ENCODE measurements at regions of chr7 and their contacts with region 1.

Region 1: GRCh38 chr7:25862260-25863037 is 289.5 kb upstream of the NFE2L3 start:
- DNase-seq: peak; percentile 68 to 94 (median 80)
- H3K4me3 ChIP-seq: no peak overlapping the region
- H3K27ac ChIP-seq: no peak overlapping the region
- H3K4me1 ChIP-seq: peaks cover 2% of the 10 kb centered on the region
- H3K27me3 ChIP-seq: peaks cover 14% of the 10 kb centered on the region
- CTCF ChIP-seq: no peak
- EP300 ChIP-seq: no peak
- POLR2A ChIP-seq: no peak

Region 2: DNA sequence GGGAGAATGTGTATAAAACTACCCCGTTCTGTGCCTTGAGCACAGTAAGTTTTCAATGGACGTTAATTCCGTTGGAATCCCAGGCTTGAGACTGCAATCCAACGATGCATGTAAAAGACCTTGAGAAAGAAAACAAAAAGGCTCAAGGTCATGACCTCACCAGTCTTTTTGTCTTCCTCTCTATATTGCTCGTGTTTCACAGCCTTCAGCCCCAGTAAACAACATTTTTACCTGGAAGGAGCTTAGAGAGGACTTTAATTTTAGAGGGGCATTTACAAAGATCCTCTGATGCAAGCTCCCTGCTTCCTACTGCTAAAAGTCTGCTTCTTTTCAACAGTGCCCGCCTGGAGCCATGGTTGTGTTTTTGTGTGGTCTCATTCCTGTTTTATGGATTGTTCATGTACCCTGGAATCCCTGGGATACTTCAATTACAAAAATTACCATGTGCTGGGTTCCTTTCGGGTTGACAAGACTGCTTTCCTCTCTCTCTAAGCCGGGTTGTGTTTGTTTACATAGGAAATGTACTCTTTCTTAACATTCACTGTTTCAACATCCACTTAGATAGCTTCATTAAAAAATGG is 30.5 kb before region 1 on chr7:
- intact Hi-C with region 1: no loop called
- DNase-seq: no peak
- H3K4me3 ChIP-seq: no peak overlapping the region
- H3K27ac ChIP-seq: peak overlapping the region in 1 of 2 donors; percentile 28
- H3K4me1 ChIP-seq: peaks cover 20% of the 10 kb centered on the region
- H3K27me3 ChIP-seq: no peaks in the 10 kb centered on the region
- CTCF ChIP-seq: no peak
- EP300 ChIP-seq: no peak
- POLR2A ChIP-seq: no peak

Region 3: GRCh38 chr7:26143298-26144048 is 281.0 kb after region 1 on chr7:
- intact Hi-C with region 1: no loop called
- DNase-seq: no peak
- H3K4me3 ChIP-seq: no peak overlapping the region
- H3K27ac ChIP-seq: no peak overlapping the region
- H3K4me1 ChIP-seq: peaks cover 2% of the 10 kb centered on the region
- H3K27me3 ChIP-seq: no peaks in the 10 kb centered on the region
- CTCF ChIP-seq: no peak
- EP300 ChIP-seq: no peak
- POLR2A ChIP-seq: no peak

Region 4: DNA sequence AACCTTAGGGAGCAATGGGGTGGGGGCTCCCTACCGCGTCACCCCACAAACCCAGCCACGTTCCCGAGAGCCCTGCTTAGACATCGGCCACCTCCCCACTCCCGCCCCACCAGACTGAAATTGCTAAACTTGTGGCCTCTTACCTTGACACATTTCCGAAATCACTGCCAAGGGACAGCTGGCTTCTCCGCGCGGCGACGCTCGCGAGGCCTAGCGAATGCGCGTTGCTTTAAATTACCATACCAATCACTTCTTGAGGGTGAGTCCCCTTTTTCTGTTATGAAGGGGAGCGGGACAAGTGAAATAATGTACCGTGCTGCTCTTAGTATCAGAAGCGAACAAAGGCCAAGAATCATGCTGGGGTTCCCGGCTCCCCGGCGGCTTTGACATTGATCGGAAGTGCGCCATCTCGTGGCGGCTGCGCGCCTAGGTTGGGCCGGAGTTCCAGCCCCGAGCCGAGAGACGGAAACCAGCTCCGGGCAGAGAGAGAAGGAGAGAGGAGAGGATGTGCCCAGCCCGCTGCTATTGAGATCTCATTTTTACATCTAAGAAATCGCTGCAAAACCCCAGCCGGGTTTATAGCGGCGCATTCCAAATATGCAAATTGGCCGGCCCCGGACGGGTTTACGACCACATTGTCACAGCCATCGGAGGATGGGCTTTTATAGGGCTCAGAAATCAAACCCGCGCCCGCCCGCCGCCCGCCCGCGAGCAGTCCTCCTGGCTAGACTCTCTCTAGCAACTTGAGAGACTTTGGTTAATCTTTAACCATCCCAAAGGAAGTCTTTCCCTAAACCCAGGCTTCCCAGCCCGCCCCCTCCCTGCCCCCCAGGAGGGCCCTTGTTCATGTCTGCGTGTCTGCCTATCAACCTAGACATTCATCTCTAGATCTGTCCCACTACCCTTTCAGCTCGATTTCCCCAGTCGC is 1317.3 kb after region 1 on chr7:
- intact Hi-C with region 1: loop called in 1 of 4 experiments (anchors 10 kb)
- DNase-seq: peak in 1 of 5 donors; percentile 72
- H3K4me3 ChIP-seq: peak overlapping the region; percentile 53
- H3K27ac ChIP-seq: no peak overlapping the region
- H3K4me1 ChIP-seq: peaks cover 2% of the 10 kb centered on the region
- H3K27me3 ChIP-seq: peaks cover 14% of the 10 kb centered on the region
- CTCF ChIP-seq: peak in 1 of 3 donors; percentile 19
- EP300 ChIP-seq: no peak
- POLR2A ChIP-seq: no peak